Activated CD4-positive, alpha-beta T cell treated with anti-CD3 and anti-CD28 coated beads, Interleukin-2, amount 10 ng/mL, durations not matched to agents 24 days and 14 days (primary cell): ENCODE measurements at regions of chr4 and their contacts with region 1.

Region 1: GRCh38 chr4:113761620-113762185 is at the start of gene CAMK2D:
- DNase-seq: peak; percentile 93
- H3K4me3 Mint-ChIP-seq: peak within 1 kb of the TSS; percentile 95
- H3K27ac Mint-ChIP-seq: peak within 1 kb of the TSS; percentile 99
- H3K4me1 Mint-ChIP-seq: peaks cover 44% of the 10 kb centered on the region
- H3K27me3 Mint-ChIP-seq: peaks cover 3% of the 10 kb centered on the region
- total RNA-seq, gene CAMK2D: 63.8 and 69.3 TPM in 2 replicates

Region 2: GRCh38 chr4:112636688-112637551 is 1124.8 kb before region 1 on chr4 and contains the starts of genes LARP7 and ZGRF1:
- intact Hi-C with region 1: loop called (anchors 2 kb)
- DNase-seq: peak; percentile 99
- H3K4me3 Mint-ChIP-seq: no peak within 1 kb of the TSS
- H3K27ac Mint-ChIP-seq: no peak within 1 kb of the TSS
- H3K4me1 Mint-ChIP-seq: peaks cover 29% of the 10 kb centered on the region
- H3K27me3 Mint-ChIP-seq: no peaks in the 10 kb centered on the region
- total RNA-seq, gene LARP7: 47.6 and 48.5 TPM in 2 replicates
- total RNA-seq, gene ZGRF1: 32.4 and 37.0 TPM in 2 replicates

Region 3: DNA sequence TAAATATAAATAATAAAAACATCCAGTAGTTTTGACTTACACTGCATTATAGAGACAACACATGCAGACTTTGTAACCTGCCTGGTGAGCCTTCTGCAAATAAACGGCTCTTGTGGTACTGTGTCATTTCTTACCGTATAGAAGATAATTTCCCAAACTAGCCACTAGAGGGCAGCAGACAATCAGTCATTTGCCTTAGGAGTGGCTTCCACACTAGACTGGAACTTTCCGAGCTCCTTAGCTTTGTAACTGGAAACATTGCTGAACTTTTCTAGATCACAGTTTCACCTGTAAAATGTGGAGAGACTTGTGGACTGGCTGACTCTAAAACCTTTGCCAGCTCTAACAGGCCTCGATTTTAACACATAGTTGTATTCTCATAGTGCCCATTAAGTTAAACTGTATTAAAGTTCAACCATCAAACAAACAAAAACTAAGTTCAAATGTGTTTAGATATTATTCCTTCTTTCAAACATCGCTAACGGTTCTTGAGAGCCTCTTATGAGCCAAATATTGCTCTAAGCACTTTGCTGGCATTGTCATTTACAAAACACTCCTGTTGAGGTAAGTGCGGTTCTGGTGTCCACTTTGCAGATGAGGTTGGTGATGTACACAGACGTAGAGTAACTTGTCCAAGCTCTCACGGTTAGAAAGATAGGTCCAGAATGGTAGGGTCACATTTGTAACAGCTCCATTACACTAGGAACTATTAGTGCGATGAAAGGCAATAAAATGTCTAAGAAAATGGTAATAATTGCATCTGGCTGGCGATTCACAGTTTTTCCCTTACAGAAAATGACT is 366.8 kb before region 1 on chr4:
- intact Hi-C with region 1: loop called (anchors 1 kb)
- DNase-seq: peak; percentile 90
- H3K4me3 Mint-ChIP-seq: no peak overlapping the region
- H3K27ac Mint-ChIP-seq: no peak overlapping the region
- H3K4me1 Mint-ChIP-seq: peaks cover 2% of the 10 kb centered on the region
- H3K27me3 Mint-ChIP-seq: peaks cover 5% of the 10 kb centered on the region

Region 4: DNA sequence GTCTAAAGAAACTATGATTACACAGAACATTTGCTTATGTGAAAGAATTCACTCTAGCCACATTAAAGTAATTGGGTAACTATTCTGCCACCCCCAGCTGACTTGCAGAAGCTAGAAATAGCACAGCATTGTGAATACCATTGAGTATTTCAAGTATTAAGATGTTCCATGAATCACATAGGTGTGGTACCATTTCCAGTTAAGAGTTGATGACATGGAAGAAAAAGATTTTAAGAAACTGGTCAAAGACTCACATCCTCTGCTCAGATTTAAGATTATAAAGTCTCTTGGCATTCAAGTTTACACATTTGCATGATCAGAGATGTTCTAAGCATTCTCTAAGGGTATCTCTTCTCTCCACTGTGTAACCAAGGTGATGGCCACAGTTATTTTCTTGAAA is 287.7 kb before region 1 on chr4:
- intact Hi-C with region 1: loop called (anchors 1 kb)
- DNase-seq: no peak
- H3K4me3 Mint-ChIP-seq: no peak overlapping the region
- H3K27ac Mint-ChIP-seq: peak overlapping the region; percentile 79
- H3K4me1 Mint-ChIP-seq: peaks cover 27% of the 10 kb centered on the region
- H3K27me3 Mint-ChIP-seq: no peaks in the 10 kb centered on the region

Region 5: GRCh38 chr4:113547487-113548042 is 214.1 kb before region 1 on chr4:
- intact Hi-C with region 1: loop called (anchors 1 kb)
- DNase-seq: peak; percentile 96
- H3K4me3 Mint-ChIP-seq: peak overlapping the region; percentile 17
- H3K27ac Mint-ChIP-seq: peak overlapping the region; percentile 25
- H3K4me1 Mint-ChIP-seq: peaks cover 23% of the 10 kb centered on the region
- H3K27me3 Mint-ChIP-seq: no peaks in the 10 kb centered on the region

Region 6: GRCh38 chr4:113636438-113636818 is 125.3 kb before region 1 on chr4:
- intact Hi-C with region 1: loop called (anchors 2 kb)
- DNase-seq: peak; percentile 71
- H3K4me3 Mint-ChIP-seq: peak overlapping the region; percentile 69
- H3K27ac Mint-ChIP-seq: peak overlapping the region; percentile 73
- H3K4me1 Mint-ChIP-seq: peaks cover 48% of the 10 kb centered on the region
- H3K27me3 Mint-ChIP-seq: no peaks in the 10 kb centered on the region

Region 7: DNA sequence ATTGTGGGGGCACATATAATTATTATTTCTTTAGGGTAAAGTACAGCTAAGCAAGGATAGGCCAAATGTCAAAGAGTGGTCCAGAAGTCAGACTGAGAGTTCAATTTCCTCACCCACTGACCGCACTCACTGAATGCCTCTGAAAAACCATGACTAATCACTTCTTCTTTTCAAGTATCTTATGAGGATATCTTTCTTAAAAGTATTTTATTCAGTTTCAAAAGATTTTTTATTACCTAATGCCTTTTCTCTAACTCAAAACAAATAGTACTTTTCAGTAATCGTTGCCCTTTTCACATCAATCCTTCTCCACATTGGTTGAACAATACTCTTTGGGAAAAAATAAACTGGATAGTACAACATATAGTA is 61.6 kb after region 1 on chr4:
- intact Hi-C with region 1: loop called (anchors 1 kb)
- DNase-seq: no peak
- H3K4me3 Mint-ChIP-seq: no peak overlapping the region
- H3K27ac Mint-ChIP-seq: no peak overlapping the region
- H3K4me1 Mint-ChIP-seq: peaks cover 24% of the 10 kb centered on the region
- H3K27me3 Mint-ChIP-seq: no peaks in the 10 kb centered on the region